ENCODE measurements at regions of chr3 and their contacts with region 1.

Region 1: DNA sequence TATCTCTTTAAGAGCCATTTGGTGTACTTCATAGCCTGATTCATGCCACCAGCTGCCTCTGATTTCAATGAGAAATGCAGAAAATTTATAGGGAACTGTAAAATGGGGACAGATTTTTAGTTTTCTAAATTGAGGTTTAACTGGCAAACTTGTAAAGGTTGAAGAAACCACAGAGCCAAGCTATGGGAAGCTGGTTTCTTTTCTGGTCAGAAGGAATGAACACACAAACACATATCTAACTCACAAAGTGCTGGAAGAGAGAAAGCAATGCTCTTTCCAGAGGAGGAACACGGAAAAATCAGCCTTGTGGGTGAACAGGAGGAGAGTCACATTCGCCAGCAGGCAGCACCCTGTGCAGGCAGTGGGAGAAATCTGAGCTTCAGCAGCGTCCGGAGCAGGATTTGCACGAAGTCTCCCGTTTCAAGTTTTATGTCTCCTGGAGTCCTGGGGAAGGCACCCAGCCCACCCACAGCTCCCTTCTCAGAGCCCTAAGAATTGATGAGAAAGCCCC is 481 bp downstream of the MASP1 start:
- DNase-seq: peak; percentile 64
- ATAC-seq: peak; percentile 56
- H3K4me3 ChIP-seq: peak overlapping the region; percentile 57
- H3K27ac ChIP-seq: peak overlapping the region; percentile 91
- H3K4me1 ChIP-seq: peaks cover 22% of the 10 kb centered on the region
- H3K27me3 ChIP-seq: no peaks in the 10 kb centered on the region
- CTCF ChIP-seq: no peak
- POLR2A ChIP-seq: no peak
- RAD21 ChIP-seq: no peak

Region 2: GRCh38 chr3:187210545-187211327 is 80.3 kb before region 1 on chr3:
- CTCF ChIA-PET with region 1: no interaction called
- POLR2A ChIA-PET with region 1: no interaction called
- dilution Hi-C with region 1: no loop called
- in situ Hi-C with region 1: no loop called
- intact Hi-C with region 1: no loop called
- DNase-seq: peak; percentile 41
- ATAC-seq: peak; percentile 83
- H3K4me3 ChIP-seq: no peak overlapping the region
- H3K27ac ChIP-seq: no peak overlapping the region
- H3K4me1 ChIP-seq: peaks cover 8% of the 10 kb centered on the region
- H3K27me3 ChIP-seq: no peaks in the 10 kb centered on the region; the same call in 1 of the 2 replicates
- CTCF ChIP-seq: no peak
- POLR2A ChIP-seq: no peak
- RAD21 ChIP-seq: no peak

Region 3: GRCh38 chr3:187237741-187238140 is 53.3 kb before region 1 on chr3:
- CTCF ChIA-PET with region 1: no interaction called
- POLR2A ChIA-PET with region 1: no interaction called
- dilution Hi-C with region 1: no loop called
- in situ Hi-C with region 1: loop called (anchors 5 kb)
- intact Hi-C with region 1: no loop called
- DNase-seq: no peak
- ATAC-seq: no peak
- H3K4me3 ChIP-seq: no peak overlapping the region
- H3K27ac ChIP-seq: no peak overlapping the region
- H3K4me1 ChIP-seq: 0 out of 2 replicates have a peak, but pooled peaks cover 2% of the 10 kb centered on the region
- H3K27me3 ChIP-seq: no peaks in the 10 kb centered on the region; the same call in 1 of the 2 replicates
- CTCF ChIP-seq: no peak
- POLR2A ChIP-seq: no peak
- RAD21 ChIP-seq: no peak

Measured in IMR-90 (cell line).